Right ventricle myocardium superior (tissue), 1 donor: ENCODE measurements at regions of chr1 and their contacts with region 1.

Region 1: GRCh38 chr1:84433258-84434080 is 35.2 kb downstream of the DNASE2B start:
- DNase-seq: peak; percentile 45
- ATAC-seq: peak; percentile 91

Region 2: GRCh38 chr1:83931658-83932253 is 501.7 kb before region 1 on chr1:
- intact Hi-C with region 1: loop called (anchors 10 kb)
- DNase-seq: no peak
- ATAC-seq: peak; percentile 88

Region 3: GRCh38 chr1:84135341-84135740 is 298.1 kb before region 1 on chr1:
- intact Hi-C with region 1: loop called (anchors 5 kb)
- DNase-seq: no peak
- ATAC-seq: no peak

Region 4: GRCh38 chr1:84387480-84388163 is 45.8 kb before region 1 on chr1:
- intact Hi-C with region 1: no loop called
- DNase-seq: no peak
- ATAC-seq: no peak

Region 5: GRCh38 chr1:84605157-84605556 is 171.7 kb after region 1 on chr1:
- intact Hi-C with region 1: loop called (anchors 5 kb)
- DNase-seq: no peak
- ATAC-seq: no peak

Region 6: DNA sequence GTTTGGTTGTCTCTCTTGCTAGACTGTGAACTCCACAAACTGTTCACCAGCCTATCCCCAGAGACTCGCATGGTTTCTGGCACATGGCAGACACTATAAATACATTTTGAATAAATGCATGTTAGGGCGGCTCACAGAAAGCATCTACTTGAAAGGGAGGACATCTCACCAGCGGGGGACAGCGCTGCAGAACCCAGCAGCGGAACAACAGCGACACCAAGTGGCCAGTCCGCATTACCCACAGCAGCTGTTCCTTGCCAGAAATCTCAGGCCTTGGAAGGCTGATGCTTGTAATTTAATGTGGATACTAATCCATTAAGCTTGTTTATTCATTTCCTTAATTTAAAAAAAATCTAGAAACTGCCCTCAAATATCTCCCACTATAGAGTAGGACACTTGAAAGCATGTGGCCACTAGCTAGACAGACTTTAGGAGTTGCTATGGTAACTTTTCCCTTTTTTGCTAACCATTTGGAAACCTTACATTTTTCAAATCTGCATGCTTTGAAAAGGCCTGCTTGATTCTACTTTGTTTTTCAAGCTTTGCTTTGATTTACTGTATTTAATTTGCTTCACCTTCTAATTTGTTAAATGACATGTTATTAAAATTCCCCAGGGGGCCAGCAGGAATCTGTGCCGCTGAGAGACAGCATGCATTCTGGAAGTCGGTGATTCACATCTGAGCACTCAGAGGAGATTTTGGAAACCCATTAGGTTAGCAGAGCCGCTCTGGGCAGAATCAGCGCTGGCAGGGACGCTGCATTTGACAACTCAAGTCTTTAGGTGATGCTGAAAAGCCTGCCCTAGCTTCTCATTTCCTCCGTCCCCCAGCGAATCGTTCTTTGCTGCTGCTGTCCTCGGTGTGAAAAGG is 320.3 kb after region 1 on chr1:
- intact Hi-C with region 1: loop called (anchors 10 kb)
- DNase-seq: peak; percentile 72
- ATAC-seq: peak; percentile 94